ENCODE measurements at regions of chr16 and their contacts with region 1.

Region 1: DNA sequence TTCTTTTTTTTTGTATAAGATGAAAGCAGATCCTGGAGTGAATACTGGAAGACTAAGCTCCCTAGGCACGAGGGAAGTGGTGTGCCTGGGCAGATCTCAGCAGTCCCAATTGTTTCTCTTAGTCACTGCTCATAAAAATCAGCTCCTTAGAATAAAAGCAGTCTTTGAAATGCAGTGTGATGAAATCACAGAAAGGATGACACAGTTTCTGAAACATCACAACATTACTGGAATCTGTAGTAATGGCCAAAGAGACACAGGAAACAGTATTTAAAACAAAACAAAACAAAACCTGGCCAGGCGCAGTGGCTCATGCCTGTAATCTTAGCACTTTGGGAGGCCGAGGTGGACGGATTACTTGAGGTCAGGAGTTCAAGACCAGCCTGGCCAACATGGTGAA is 34.7 kb upstream of the ZFHX3 start:
- DNase-seq: peak; percentile 91
- H3K4me3 ChIP-seq: no peak overlapping the region
- CTCF ChIP-seq: no peak

Region 2: DNA sequence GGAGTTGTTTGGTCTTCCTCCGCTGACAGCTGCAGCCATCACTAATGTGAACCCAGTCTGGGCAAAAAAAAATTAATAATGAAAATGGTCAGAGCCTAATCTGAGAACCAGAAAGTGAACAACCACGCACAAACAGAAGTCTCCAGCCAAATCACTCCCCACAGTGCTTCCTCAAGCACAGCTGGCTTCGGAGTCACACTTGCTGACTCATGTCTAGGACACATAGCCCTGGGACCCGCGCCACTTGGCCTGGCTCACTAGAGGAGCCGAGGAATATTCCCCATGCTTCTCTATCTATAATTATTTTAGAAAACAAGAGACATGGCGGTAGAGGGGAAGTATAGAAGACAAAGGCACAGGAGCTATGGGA is 143.8 kb before region 1 on chr16:
- CTCF ChIA-PET with region 1: no interaction called
- POLR2A ChIA-PET with region 1: no interaction called
- DNase-seq: no peak
- H3K4me3 ChIP-seq: no peak overlapping the region
- CTCF ChIP-seq: no peak

Region 3: DNA sequence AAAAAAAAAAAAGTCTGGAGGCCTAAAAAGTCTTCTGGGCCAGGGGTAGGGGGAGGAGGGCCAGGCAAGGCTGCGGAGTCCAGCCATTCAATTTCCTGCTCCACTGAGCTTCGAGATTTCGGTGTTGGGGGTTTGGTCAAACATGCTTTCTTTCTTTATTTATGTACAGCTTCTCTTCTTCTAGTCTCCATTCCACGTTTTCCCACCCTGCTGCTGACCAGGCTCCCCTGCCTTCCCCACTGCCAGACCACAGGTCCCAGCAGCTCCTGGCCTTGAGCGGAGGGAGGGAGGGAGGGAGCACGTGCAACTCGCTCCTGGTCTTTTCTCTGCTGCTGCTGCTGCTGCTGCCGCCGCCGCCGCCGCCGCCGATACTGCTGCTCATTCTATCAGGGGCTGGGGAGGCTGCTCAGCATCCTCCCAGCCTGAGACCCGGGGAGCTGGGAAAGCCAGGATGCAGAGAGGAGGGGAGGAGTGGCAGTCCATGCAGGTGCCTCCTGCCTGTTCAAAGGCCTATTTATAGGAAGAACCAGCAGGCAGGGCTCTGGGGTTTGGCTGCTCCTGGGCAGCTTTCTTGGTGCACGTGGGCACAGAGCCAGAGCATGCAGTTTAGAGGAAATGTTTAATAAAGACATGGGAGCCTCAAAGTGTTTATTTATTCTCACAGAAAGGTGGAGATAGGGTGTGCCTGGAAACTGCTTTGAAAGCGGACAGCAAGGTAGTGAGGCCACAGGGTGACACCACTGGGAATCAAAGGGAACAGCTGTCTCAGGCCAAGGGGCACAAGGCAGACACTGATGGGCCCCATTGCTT is 11.3 kb before region 1 on chr16:
- CTCF ChIA-PET with region 1: interaction called, 14 read pairs
- POLR2A ChIA-PET with region 1: interaction called, 5 read pairs
- DNase-seq: no peak
- H3K4me3 ChIP-seq: no peak overlapping the region
- CTCF ChIP-seq: no peak

Region 4: GRCh38 chr16:73101568-73101967 is 19.0 kb after region 1 on chr16:
- CTCF ChIA-PET with region 1: no interaction called
- POLR2A ChIA-PET with region 1: no interaction called
- DNase-seq: no peak
- H3K4me3 ChIP-seq: no peak overlapping the region
- CTCF ChIP-seq: no peak

Region 5: GRCh38 chr16:73143576-73144422 is 61.2 kb after region 1 on chr16:
- CTCF ChIA-PET with region 1: no interaction called
- POLR2A ChIA-PET with region 1: no interaction called
- DNase-seq: no peak
- H3K4me3 ChIP-seq: peak overlapping the region; percentile 46
- CTCF ChIP-seq: no peak

Measured in AG04449 (cell line).